PC-9 (cell line): ENCODE measurements at regions of chr11 and their contacts with region 1.

Region 1: DNA sequence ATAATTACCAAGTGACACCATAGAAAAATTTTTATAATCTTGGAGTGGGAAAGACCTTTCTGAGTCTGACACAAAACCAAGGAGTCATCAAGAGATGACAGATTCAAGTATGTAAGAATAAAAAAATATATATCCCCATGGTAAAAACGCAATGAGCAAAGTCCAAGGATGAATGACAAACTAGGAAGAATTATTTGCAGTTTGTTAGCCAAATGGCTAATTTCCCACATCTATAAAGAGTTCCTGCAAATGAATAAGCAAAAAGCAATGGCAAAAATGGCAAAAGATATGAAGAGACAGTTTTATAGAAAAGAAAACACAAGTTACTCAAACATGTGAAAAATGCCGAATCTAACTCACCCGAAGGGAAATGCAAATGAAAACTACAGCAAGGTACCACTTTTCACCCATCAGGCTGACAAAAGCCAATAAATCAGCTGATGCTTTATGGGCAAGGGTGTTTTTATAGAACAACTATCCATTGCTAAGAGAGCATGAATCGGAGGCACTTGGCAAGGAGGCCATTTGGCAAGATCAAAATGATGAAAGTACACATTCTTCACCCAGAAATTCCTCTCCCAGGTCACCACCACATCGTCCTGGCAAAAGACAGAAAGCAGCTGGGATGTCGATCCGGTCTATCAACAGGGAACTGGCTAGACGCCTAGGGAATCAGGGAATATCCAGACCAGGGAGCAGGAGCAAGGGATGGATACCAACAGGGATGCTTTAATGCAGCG is 21.1 kb upstream of the KLHL35 start:
- DNase-seq: no peak
- H3K4me3 ChIP-seq: no peak overlapping the region
- H3K27ac ChIP-seq: no peak overlapping the region
- H3K4me1 ChIP-seq: no peaks in the 10 kb centered on the region
- H3K27me3 ChIP-seq: 0 out of 2 replicates have a peak, but pooled peaks cover 8% of the 10 kb centered on the region
- CTCF ChIP-seq: no peak

Region 2: GRCh38 chr11:74877132-74877531 is 577.0 kb before region 1 on chr11:
- CTCF ChIA-PET with region 1: no interaction called
- POLR2A ChIA-PET with region 1: no interaction called
- intact Hi-C with region 1: no loop called
- DNase-seq: peak in 1 of 2 experiments; percentile 42
- H3K4me3 ChIP-seq: 0 out of 2 replicates have a peak overlapping the region, but pooled peaks have one; percentile 5
- H3K27ac ChIP-seq: no peak overlapping the region
- H3K4me1 ChIP-seq: no peaks in the 10 kb centered on the region
- H3K27me3 ChIP-seq: no peaks in the 10 kb centered on the region
- CTCF ChIP-seq: peak; percentile 83

Region 3: DNA sequence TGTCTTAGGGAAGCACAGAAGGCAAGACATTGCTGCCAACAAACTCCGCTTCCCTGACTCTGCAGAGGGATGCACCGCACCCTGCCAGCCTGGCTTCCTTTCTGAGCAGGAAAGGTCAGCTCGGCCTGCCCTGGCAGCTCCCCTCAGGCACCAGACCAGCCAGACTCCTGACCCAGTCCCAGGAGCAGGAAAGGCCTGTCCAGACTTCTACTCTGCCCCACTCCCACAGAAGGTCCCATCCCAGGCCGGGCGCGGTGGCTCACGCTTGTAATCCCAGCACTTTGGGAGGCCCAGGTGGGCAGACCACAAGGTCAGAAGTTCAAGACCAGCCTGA is 120.3 kb before region 1 on chr11:
- CTCF ChIA-PET with region 1: interaction called, 15 read pairs
- POLR2A ChIA-PET with region 1: no interaction called
- intact Hi-C with region 1: no loop called
- DNase-seq: peak in 1 of 2 experiments; percentile 69
- H3K4me3 ChIP-seq: no peak overlapping the region
- H3K27ac ChIP-seq: peak overlapping the region; percentile 37; the same call in 1 of the 2 replicates
- H3K4me1 ChIP-seq: peaks cover 74% of the 10 kb centered on the region
- H3K27me3 ChIP-seq: no peaks in the 10 kb centered on the region
- CTCF ChIP-seq: no peak